A673 (cell line): ENCODE measurements at regions of chr3 and their contacts with region 1.

Region 1: GRCh38 chr3:101573449-101574387 is at the start of gene PCNP:
- DNase-seq: peak; percentile 99
- H3K4me3 ChIP-seq: peak within 1 kb of the TSS; percentile 84
- H3K27ac ChIP-seq: peak within 1 kb of the TSS; percentile 92
- H3K4me1 ChIP-seq: peaks cover 16% of the 10 kb centered on the region
- H3K27me3 ChIP-seq: no peaks in the 10 kb centered on the region
- CTCF ChIP-seq: peak; percentile 90
- total RNA-seq, gene PCNP: 194 and 201 TPM in 2 replicates

Region 2: GRCh38 chr3:100316641-100317069 is 1257.1 kb before region 1 on chr3:
- CTCF ChIA-PET with region 1: no interaction called
- POLR2A ChIA-PET with region 1: interaction called, 13 read pairs
- intact Hi-C with region 1: no loop called
- DNase-seq: peak; percentile 77
- H3K4me3 ChIP-seq: no peak overlapping the region
- H3K27ac ChIP-seq: no peak overlapping the region
- H3K4me1 ChIP-seq: peaks cover 3% of the 10 kb centered on the region
- H3K27me3 ChIP-seq: no peaks in the 10 kb centered on the region
- CTCF ChIP-seq: peak; percentile 70

Region 3: GRCh38 chr3:101665851-101666250 is 92.1 kb after region 1 on chr3:
- CTCF ChIA-PET with region 1: no interaction called
- POLR2A ChIA-PET with region 1: interaction called, 22 read pairs
- intact Hi-C with region 1: no loop called
- DNase-seq: no peak
- H3K4me3 ChIP-seq: no peak overlapping the region
- H3K27ac ChIP-seq: no peak overlapping the region
- H3K4me1 ChIP-seq: no peaks in the 10 kb centered on the region
- H3K27me3 ChIP-seq: no peaks in the 10 kb centered on the region
- CTCF ChIP-seq: no peak

Region 4: DNA sequence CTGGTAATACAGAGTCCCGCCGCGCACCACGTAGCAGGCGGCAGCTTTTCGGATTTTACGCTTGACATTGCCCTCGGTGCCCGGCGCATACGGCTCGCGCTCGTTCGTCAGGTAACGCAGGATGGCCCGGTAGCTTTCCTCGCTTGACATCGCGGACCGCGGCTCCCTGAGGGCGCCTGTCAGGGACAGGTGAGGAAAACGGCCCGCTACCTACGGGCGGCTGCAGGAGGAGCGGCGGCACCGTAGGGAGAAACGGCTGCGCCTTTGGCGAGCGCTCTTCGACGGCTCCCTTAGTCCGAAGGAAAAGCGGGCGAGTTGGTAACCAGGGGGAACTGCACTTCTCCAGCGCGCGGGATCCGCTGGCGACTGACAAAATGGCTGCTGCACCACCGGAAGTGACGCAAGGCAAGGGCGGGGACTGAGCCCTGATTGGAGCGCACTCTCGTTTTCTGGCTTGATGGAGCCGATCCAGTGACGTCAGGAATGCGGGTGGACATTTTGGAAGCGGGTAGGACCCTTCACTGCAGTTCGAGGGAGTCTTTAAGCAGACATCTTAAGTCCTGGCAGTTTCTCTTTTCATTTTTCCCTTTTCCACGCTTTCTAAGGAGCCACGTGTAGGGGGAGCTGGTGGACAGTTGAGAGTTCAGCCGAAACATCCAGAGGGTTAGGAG is 103.2 kb after region 1 on chr3 and contains the start of gene ZBTB11:
- CTCF ChIA-PET with region 1: no interaction called
- POLR2A ChIA-PET with region 1: interaction called, 4 read pairs
- intact Hi-C with region 1: loop called (anchors 5 kb)
- DNase-seq: peak; percentile 100
- H3K4me3 ChIP-seq: peak within 1 kb of the TSS; percentile 96
- H3K27ac ChIP-seq: peak within 1 kb of the TSS; percentile 97
- H3K4me1 ChIP-seq: peaks cover 15% of the 10 kb centered on the region
- H3K27me3 ChIP-seq: no peaks in the 10 kb centered on the region
- CTCF ChIP-seq: peak; percentile 68
- total RNA-seq, gene ZBTB11: 21.7 and 22.4 TPM in 2 replicates

Region 5: GRCh38 chr3:101695779-101696372 is 122.2 kb after region 1 on chr3:
- CTCF ChIA-PET with region 1: interaction called, 11 read pairs
- POLR2A ChIA-PET with region 1: no interaction called
- intact Hi-C with region 1: no loop called
- DNase-seq: peak; percentile 85
- H3K4me3 ChIP-seq: peak overlapping the region; percentile 13
- H3K27ac ChIP-seq: no peak overlapping the region
- H3K4me1 ChIP-seq: peaks cover 19% of the 10 kb centered on the region
- H3K27me3 ChIP-seq: no peaks in the 10 kb centered on the region
- CTCF ChIP-seq: peak; percentile 67